Lower leg skin (tissue), 4 donors: ENCODE measurements at regions of chr5 and their contacts with region 1.

Region 1: DNA sequence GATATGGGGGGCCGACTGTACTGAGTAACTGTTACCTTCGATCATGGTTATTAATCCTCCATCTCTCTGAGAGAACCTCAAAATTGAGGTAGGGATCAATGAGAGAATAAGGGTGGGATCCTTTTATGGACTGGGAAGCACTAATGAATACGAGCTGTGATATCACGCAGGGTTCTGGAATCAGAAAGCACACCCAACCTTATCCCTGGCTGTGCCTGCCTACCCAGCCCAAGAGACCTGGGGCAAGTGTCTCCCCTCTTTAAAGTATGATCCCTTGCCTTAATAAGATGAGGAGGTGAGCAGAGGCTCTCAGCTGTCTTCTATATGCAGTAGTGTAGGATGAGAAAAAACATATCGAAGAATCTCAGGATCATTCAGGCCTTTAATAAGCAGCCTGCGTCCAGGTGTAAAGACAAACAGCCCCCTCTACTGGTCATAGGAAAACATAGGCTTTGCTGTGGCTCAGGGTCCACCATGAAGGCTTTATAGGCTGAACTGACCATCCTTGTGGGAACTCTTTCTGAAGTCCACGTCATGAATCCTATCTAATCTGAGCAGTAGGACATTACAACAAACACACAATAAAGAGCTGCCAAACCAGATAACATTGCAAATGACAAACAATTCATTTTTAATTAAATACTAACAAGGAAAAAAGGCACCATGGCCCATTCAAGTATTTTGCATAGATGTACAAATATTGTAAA is 16.8 kb downstream of the NIPAL4 start:
- DNase-seq: peak in 1 of 2 donors; percentile 37
- H3K4me3 ChIP-seq: no peak overlapping the region
- CTCF ChIP-seq: no peak
- POLR2A ChIP-seq: no peak

Region 2: DNA sequence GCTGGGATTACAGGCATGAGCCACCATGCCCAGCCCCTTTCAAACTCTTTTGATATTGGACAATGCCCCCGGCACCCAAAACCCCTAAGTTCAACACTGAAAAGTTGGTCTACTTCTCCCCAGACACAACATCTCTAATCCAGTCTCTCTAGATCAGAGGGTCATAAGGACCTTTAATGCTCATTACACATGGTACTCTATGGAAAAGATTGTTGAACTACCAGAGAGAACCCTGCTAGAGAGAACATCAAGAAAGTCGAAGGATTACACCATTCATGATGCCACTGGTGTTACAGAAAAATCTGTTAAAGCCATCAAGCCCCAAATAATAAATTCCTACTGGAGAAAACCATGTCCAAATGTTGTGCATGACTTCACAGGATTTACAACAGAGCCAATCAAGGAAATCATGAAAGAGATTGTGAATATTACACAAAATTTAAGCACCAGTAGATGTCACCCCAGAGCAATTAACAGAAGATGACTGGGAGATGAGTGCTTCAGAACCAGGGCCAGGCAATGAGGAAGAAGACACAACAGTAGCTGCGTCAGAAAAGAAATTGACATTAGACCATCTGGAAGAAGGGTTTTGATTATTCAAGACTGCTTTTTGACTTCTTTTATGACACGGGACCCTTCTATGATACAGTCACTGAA is 45.2 kb before region 1 on chr5:
- intact Hi-C with region 1: loop called (anchors 5 kb)
- DNase-seq: no peak
- H3K4me3 ChIP-seq: no peak overlapping the region
- CTCF ChIP-seq: no peak
- POLR2A ChIP-seq: no peak

Region 3: DNA sequence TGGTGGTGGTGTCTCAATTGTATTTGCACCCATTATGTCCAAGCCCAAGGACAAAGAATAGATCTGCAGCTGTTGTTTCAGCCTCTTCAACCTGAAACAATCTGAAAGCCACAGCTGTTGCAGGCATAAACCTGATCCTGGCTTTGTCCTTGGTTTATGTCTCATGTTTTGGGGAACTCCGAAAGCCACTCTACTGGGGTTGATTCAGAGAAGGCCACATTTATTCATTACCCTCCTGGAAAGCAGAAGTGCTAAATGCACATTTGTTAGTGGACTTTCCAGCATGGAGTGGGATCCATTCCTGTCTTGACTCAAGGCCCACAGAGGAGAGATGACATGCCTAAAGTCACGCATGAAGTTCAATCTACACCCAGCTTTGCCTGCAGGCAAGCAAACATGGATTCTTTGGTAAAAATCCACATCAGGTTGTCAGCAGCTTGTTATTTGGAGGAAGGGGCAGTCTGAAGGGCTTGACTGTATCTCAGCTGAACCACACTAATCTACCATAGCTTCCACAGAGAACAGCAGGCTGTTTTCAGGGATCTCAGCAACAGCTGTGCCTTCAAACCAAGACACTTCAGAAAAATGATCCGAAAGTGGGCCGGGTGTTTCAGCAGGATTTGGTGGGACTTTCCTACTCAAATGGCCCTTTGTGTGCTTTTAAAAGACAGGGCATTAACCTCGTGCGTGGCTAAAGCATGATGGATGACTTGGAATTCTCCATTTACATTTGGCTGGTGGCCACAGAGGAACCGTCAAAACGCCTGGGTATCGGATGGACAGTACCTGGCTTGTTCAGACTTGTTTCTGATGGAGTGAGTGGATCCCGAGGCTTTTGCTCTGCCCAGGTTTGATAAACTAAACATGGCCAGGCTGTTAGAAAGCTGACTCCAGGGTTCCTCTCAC is 135.0 kb after region 1 on chr5:
- intact Hi-C with region 1: no loop called
- DNase-seq: no peak
- H3K4me3 ChIP-seq: no peak overlapping the region
- CTCF ChIP-seq: no peak
- POLR2A ChIP-seq: no peak

Region 4: DNA sequence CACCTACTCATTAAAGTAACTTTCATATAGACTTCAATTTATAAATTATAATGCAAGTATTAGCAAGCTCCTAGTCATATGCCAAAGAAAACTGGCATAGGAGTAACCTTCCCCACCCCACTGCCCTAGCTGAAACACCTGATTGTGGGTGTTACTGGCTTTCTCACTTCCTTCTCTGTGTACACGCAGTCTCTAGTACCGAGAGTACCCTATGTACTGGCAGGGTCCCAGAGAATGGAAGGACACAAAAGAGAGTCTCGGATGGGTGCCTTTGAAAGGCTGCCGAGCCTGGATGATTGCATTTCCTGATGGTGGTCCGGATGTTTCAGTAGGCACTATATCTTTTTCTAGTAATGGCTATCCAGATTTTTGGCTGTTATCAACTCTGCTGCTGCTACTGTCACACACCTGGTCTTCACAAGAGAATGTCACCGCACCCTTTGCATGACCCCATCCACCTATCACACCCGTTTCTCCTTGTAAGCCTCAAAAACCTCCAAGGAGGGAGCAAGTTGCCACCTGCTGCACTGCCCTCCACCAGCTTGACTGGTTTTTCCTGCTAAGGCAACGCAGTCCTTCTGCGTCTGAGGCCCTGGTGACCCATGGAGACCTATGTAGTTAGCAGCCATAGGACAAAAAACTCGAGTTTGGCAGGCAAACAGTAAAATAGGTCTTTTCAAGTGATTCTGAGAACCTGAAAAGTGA is 435.9 kb after region 1 on chr5:
- intact Hi-C with region 1: no loop called
- DNase-seq: peak in 1 of 2 donors; percentile 70
- H3K4me3 ChIP-seq: no peak overlapping the region
- CTCF ChIP-seq: no peak
- POLR2A ChIP-seq: no peak